Activated CD4-positive, alpha-beta memory T cell treated with anti-CD3 and anti-CD28 coated beads, Interleukin-2, amount 10 ng/mL, durations not matched to agents 7 days and 5 days (primary cell): ENCODE measurements at regions of chr5 and their contacts with region 1.

Region 1: GRCh38 chr5:95961617-95962474 is at the start of gene ELL2:
- DNase-seq: peak; percentile 99
- H3K4me3 Mint-ChIP-seq: peak within 1 kb of the TSS; percentile 95
- H3K27ac Mint-ChIP-seq: peak within 1 kb of the TSS; percentile 98
- H3K4me1 Mint-ChIP-seq: peaks cover 62% of the 10 kb centered on the region
- H3K27me3 Mint-ChIP-seq: no peaks in the 10 kb centered on the region
- total RNA-seq, gene ELL2: 54.4 to 59.0 TPM

Region 2: DNA sequence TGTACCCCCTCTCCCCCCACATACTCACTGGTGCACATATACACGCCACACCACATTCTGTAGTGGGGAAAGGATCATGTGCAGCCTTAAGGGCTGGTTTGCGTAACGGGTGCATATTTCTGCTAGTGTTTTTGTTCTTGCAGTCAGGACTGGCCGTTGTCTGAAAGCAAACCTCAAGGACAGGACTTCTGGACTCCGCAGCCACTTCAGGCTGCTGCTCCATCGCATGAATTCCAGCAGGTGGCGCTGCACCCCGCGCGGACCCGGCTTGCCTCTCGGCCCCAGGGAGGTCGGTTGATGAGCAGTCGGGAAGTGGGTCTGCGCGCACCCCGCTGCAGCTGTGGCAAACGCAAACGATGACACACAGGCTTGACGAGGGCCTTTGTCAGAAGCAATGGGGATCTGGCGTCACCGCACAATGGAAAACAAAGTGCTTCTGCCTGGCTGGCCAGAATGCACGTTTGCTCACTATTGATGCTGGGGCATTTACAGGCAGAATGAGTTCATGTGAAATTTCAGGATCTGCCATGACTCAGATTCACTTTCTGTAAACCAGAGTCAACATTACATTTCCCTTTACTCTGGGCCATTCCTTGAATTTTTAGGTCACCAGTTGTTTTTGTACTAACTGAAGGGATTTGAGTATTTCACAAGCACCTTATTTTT is 103.1 kb before region 1 on chr5:
- CTCF ChIA-PET with region 1: interaction called, 12 read pairs
- POLR2A ChIA-PET with region 1: interaction called, 12 read pairs
- DNase-seq: peak; percentile 92
- H3K4me3 Mint-ChIP-seq: peak overlapping the region; percentile 43
- H3K27ac Mint-ChIP-seq: peak overlapping the region; percentile 28
- H3K4me1 Mint-ChIP-seq: peaks cover 50% of the 10 kb centered on the region
- H3K27me3 Mint-ChIP-seq: no peaks in the 10 kb centered on the region

Region 3: GRCh38 chr5:95870105-95870672 is 91.7 kb before region 1 on chr5:
- CTCF ChIA-PET with region 1: interaction called, 12 read pairs
- POLR2A ChIA-PET with region 1: interaction called, 31 read pairs
- DNase-seq: peak; percentile 37
- H3K4me3 Mint-ChIP-seq: peak overlapping the region; percentile 62
- H3K27ac Mint-ChIP-seq: peak overlapping the region; percentile 89
- H3K4me1 Mint-ChIP-seq: peaks cover 47% of the 10 kb centered on the region
- H3K27me3 Mint-ChIP-seq: no peaks in the 10 kb centered on the region

Region 4: DNA sequence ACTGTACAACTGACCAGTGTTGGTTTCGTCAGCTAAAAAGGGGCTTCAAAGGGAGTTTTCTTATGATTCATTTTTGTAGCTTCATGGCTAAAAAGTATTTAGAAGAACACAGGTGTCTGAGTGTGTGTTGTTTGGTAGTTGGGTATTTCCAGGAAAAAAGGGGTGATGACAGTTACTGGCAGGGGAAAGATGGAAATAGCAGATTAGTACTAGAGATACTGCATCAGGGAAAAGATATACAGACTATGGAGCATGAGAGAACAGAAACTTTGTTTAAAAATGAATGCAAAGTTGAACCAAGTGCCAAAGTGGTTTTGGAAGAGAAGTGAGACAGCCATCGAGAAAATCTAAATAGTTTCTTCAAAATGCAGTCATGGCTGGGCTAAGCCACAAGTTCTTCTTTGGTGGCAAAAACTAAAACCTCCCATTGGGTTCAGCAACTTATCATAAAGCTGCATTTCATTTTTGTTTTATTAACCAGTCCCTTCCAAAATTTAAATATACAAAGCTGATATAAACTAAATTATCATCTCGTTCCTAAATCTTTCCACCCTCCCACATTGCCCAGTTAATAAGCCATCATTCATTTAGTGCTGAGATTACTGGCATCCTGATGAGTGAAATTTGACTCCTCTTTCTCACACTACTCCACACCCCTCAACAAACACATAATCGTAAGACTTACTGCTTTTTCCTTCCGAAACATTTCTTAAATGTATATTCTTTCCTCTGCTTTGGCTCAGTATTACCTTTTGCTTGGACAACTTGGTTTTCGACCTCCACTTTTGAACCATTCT is 33.7 kb before region 1 on chr5:
- CTCF ChIA-PET with region 1: interaction called, 8 read pairs
- POLR2A ChIA-PET with region 1: interaction called, 11 read pairs
- DNase-seq: no peak
- H3K4me3 Mint-ChIP-seq: peak overlapping the region; percentile 26
- H3K27ac Mint-ChIP-seq: peak overlapping the region; percentile 81
- H3K4me1 Mint-ChIP-seq: peaks cover 72% of the 10 kb centered on the region
- H3K27me3 Mint-ChIP-seq: no peaks in the 10 kb centered on the region

Region 5: DNA sequence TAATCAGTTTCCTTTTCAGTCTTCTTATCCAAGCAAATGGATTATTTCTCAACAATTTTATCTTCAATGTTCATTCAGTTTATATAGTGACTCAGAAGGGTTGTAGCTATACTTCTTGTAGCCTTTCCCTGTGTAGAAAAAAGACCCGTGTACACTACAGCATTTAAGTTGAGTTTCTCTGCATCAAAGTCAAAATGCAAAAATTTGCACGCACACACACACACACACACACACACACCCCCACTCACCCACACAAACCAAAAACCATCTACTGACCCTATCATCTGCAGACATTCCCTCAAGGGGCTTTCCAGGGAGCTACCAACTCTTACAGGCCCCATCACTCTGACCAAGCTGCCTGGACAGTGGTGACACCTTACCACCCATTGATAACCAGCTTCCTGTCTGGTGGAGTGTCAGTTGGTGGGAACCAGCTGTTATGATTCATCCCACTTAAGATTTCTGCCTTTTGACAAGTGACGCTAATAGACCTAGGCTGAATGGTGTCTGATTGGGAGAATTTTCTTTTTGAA is 12.0 kb after region 1 on chr5:
- CTCF ChIA-PET with region 1: interaction called, 15 read pairs
- POLR2A ChIA-PET with region 1: interaction called, 29 read pairs
- DNase-seq: peak; percentile 53
- H3K4me3 Mint-ChIP-seq: no peak overlapping the region
- H3K27ac Mint-ChIP-seq: peak overlapping the region; percentile 63
- H3K4me1 Mint-ChIP-seq: peaks cover 17% of the 10 kb centered on the region
- H3K27me3 Mint-ChIP-seq: no peaks in the 10 kb centered on the region